Calu3 (cell line): ENCODE measurements at regions of chr6 and their contacts with region 1.

Region 1: GRCh38 chr6:119147101-119148053 is 68.9 kb upstream of the FAM184A start:
- DNase-seq: peak; percentile 81
- H3K4me3 Mint-ChIP-seq: no peak overlapping the region
- H3K27ac Mint-ChIP-seq: peak overlapping the region; percentile 53
- H3K4me1 Mint-ChIP-seq: peaks cover 26% of the 10 kb centered on the region
- H3K27me3 Mint-ChIP-seq: no peaks in the 10 kb centered on the region
- CTCF ChIP-seq: no peak

Region 2: GRCh38 chr6:119333707-119334295 is 186.4 kb after region 1 on chr6:
- CTCF ChIA-PET with region 1: interaction called, 4 read pairs
- intact Hi-C with region 1: loop called (anchors 1 kb)
- DNase-seq: no peak
- H3K4me3 Mint-ChIP-seq: no peak overlapping the region
- H3K27ac Mint-ChIP-seq: no peak overlapping the region
- H3K4me1 Mint-ChIP-seq: no peaks in the 10 kb centered on the region
- H3K27me3 Mint-ChIP-seq: no peaks in the 10 kb centered on the region
- CTCF ChIP-seq: no peak

Region 3: DNA sequence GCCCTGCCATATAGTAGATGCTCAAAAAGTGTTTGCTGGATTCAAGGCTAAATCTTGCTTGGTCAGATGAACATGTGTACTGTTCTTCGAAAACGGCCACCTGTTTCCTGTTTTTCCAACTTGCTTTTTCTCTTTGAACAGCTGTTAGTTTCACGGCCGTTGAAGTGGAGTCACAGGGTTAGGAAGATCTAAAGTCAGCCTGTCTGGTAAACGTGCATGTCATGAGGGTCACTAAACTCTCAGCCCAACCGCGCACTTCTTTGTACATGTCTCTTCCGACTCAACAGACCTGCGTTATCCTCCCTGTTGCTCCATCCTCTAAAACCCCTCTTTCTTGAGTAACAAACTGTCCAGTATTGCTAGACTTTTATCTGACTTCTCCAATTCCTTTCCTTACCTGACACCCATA is 295.4 kb after region 1 on chr6:
- CTCF ChIA-PET with region 1: no interaction called
- intact Hi-C with region 1: loop called (anchors 10 kb)
- DNase-seq: no peak
- H3K4me3 Mint-ChIP-seq: no peak overlapping the region
- H3K27ac Mint-ChIP-seq: no peak overlapping the region
- H3K4me1 Mint-ChIP-seq: peaks cover 31% of the 10 kb centered on the region
- H3K27me3 Mint-ChIP-seq: no peaks in the 10 kb centered on the region
- CTCF ChIP-seq: no peak

Region 4: GRCh38 chr6:119978274-119978889 is 831.0 kb after region 1 on chr6:
- CTCF ChIA-PET with region 1: interaction called, 4 read pairs
- intact Hi-C with region 1: loop called (anchors 5 kb)
- DNase-seq: peak; percentile 29
- H3K4me3 Mint-ChIP-seq: no peak overlapping the region
- H3K27ac Mint-ChIP-seq: no peak overlapping the region
- H3K4me1 Mint-ChIP-seq: no peaks in the 10 kb centered on the region
- H3K27me3 Mint-ChIP-seq: no peaks in the 10 kb centered on the region
- CTCF ChIP-seq: peak; percentile 13